ENCODE measurements at regions of chr10 and their contacts with region 1.

Region 1: DNA sequence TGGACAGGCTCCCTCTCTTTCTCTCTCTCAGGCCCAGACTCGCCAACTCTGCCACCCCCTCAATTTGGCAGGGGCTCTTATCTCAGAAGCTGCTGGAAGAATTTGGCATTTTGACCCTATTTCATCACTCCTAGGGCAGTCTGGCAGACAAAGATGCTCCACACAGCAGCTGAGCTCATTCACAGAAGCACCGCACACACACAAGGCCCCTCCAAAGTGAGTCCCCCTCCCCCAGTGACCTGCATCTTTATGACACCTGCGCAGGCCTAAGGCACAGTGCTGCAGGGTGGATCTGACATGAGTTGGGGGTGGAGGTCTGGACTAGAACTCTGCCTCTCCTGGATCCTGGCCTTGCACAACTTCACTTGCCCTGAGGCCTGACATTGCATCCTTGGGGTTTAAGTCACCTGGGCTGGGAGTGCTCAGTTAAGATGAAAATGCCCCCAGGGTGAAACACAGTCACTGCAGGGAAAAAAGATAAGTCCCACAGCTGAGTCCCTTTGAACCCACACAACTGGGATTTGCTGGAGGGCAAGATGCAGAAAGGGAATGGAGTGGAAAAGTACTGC is 41.1 kb upstream of the DUSP5 start:
- DNase-seq: no peak
- ATAC-seq: no peak
- H3K4me3 ChIP-seq: no peak overlapping the region
- H3K4me3 Mint-ChIP-seq: no peak overlapping the region
- H3K27ac ChIP-seq: no peak overlapping the region
- H3K27ac Mint-ChIP-seq: no peak overlapping the region
- H3K4me1 ChIP-seq: peaks cover 27% of the 10 kb centered on the region
- H3K4me1 Mint-ChIP-seq: peaks cover 30% of the 10 kb centered on the region
- H3K27me3 ChIP-seq: no peaks in the 10 kb centered on the region
- H3K27me3 Mint-ChIP-seq: no peaks in the 10 kb centered on the region
- CTCF ChIP-seq: no peak

Region 2: DNA sequence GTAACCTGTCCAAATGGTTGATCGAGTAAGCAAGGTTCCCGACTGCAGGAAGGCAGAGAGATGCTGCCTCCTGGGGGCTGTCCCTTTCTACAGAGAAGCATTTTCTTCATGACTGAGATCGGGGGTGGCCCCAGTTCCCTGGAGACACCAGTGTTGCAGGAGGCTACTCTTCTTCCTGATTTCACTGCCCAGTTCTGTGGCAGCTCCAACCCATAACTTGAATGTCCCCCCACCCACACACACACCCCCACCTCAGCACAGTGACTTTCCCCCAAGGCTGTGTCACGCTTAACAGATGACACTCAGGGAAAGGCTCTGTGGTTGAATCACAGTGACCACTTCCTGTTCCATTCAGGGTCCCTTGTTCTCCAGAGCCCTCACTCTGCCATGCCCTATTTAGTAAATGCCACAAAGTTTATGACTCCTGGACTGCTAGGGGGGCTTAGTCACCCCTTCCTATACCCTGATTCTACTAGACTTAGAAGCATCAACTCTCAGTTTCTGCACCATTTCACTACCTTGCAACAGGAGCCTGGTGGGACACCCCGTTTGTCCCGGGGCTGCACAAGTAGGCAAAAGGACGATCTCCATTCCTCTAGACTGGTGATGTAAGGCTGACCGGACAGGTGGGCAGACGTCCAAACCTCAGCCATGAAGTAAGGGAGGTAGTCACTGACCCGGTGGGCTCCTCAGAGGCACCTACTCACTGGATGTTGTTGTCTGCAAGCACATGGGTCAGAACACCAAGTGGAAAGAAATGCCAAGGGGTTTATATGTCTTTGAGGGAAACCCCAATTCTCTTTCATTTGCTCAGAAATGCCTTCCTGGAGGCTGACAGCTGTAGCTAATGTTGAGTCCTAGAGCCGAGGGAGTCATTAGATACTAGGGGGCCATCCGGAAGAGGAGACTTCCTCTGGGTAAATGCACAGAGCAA is 79.6 kb after region 1 on chr10:
- CTCF ChIA-PET with region 1: no interaction called
- POLR2A ChIA-PET with region 1: no interaction called
- intact Hi-C with region 1: loop called in 1 of 2 experiments (anchors 5 kb)
- DNase-seq: peak; percentile 6 to 75 (median 43)
- ATAC-seq: peak; percentile 87
- H3K4me3 ChIP-seq: no peak overlapping the region
- H3K4me3 Mint-ChIP-seq: no peak overlapping the region
- H3K27ac ChIP-seq: no peak overlapping the region
- H3K27ac Mint-ChIP-seq: peak overlapping the region; percentile 23
- H3K4me1 ChIP-seq: peaks cover 11% of the 10 kb centered on the region
- H3K4me1 Mint-ChIP-seq: peaks cover 14% of the 10 kb centered on the region
- H3K27me3 ChIP-seq: no peaks in the 10 kb centered on the region
- H3K27me3 Mint-ChIP-seq: no peaks in the 10 kb centered on the region
- CTCF ChIP-seq: peak; percentile 25

Measured in CD8-positive, alpha-beta T cell (primary cell).